A549 (cell line): ENCODE measurements at regions of chr2 and their contacts with region 1.

Region 1: DNA sequence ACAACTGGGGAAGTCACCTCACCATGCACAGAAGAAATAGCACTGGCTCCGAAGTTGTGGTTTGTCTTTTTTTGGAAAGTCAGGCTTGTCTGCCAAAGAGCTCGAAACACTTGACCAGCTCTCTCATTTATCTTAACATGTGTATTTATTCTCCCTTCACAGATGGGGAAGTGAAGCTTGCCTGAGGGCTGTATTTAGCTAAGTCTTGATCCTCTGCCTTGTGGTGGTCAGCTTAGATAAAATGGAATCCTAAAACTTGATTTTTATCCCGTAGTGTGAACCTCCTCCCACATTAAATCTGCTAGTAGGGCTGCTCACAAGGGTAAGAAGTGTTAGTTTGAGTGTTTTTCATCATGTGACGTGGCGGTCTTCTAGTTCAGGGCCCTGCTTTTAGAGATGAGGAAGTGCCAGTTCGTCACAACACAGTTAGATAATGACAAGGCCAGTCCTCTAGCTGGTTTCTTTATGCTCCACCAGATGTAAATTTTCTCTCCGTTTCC is 89.7 kb downstream of the TMEM247 start:
- DNase-seq: no peak
- ATAC-seq: no peak
- H3K4me3 ChIP-seq: no peak overlapping the region
- H3K27ac ChIP-seq: no peak overlapping the region
- H3K4me1 ChIP-seq: no peaks in the 10 kb centered on the region
- CTCF ChIP-seq: no peak
- EP300 ChIP-seq: no peak
- POLR2A ChIP-seq: no peak
- RAD21 ChIP-seq: no peak

Region 2: GRCh38 chr2:46286715-46287114 is 282.4 kb before region 1 on chr2:
- CTCF ChIA-PET with region 1: no interaction called
- POLR2A ChIA-PET with region 1: no interaction called
- DNase-seq: no peak
- ATAC-seq: no peak
- H3K4me3 ChIP-seq: no peak overlapping the region
- H3K27ac ChIP-seq: peak overlapping the region in 1 of 2 experiments; percentile 53; a peak in 2 of 6 replicates
- H3K4me1 ChIP-seq: no peaks in the 10 kb centered on the region
- CTCF ChIP-seq: no peak
- EP300 ChIP-seq: no peak
- POLR2A ChIP-seq: no peak
- RAD21 ChIP-seq: no peak

Region 3: GRCh38 chr2:46555011-46555410 is 14.1 kb before region 1 on chr2:
- CTCF ChIA-PET with region 1: interaction called, 28 read pairs
- POLR2A ChIA-PET with region 1: no interaction called
- DNase-seq: peak in 1 of 2 experiments; percentile 37
- ATAC-seq: peak; percentile 66 to 75; a peak in 5 of 6 replicates
- H3K4me3 ChIP-seq: no peak overlapping the region
- H3K27ac ChIP-seq: no peak overlapping the region
- H3K4me1 ChIP-seq: no peaks in the 10 kb centered on the region
- CTCF ChIP-seq: peak; percentile 61; the same call in 2 of the 3 replicates
- EP300 ChIP-seq: no peak
- POLR2A ChIP-seq: no peak
- RAD21 ChIP-seq: peak; percentile 33 to 40; a peak in 3 of 5 replicates